Cardiac septum (tissue), 1 donor: ENCODE measurements at regions of chr1 and their contacts with region 1.

Region 1: DNA sequence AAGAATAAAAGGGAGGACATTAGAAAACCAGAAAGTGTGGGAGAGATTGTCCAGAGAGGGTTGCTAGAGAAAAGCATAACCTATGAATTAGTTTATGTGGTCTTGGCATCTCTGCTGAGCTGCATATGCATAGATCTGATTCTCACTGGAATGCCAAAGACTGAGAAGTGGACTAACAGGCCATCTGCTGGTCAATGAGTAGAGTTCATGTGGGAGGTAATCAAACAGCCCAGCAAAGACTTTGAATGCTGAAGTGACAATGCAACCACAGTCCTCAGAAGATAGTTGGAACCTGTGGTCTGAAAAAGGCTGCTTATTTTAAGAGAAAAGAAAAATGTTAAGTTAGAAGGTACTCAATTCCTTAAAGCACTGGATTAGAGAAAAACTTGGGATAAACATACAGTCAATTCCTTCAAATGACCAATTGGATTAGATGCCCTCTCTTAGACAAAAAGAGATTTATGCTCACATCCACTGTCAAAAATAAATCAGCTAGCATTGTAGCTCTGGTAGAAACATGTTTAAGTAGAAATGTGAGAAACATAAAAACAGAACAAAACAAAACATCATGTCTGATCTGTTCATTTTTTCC is 382.8 kb downstream of the AMY1C start:
- DNase-seq: no peak

Region 2: DNA sequence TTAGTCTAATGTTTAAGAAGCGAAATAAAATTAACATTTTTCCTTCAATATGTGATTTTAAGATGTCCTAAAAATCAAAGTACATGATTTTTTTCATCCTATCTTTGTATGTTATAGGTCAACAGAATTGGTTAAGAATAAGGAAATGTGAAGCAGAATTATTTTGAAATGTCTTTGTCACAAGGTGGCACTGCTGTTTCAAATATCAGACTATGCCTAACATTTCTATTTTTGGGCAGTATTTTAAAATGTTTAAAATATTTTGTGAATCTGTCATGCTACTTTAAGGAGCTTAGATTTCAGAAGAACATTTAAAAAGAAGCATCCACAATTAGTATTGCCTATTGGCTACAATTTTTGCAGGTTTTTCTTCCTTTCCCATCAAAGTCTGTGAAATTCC is 344.1 kb before region 1 on chr1:
- intact Hi-C with region 1: loop called (anchors 5 kb)
- DNase-seq: no peak

Region 3: GRCh38 chr1:104018922-104019674 is 113.4 kb before region 1 on chr1:
- intact Hi-C with region 1: no loop called
- DNase-seq: no peak

Region 4: DNA sequence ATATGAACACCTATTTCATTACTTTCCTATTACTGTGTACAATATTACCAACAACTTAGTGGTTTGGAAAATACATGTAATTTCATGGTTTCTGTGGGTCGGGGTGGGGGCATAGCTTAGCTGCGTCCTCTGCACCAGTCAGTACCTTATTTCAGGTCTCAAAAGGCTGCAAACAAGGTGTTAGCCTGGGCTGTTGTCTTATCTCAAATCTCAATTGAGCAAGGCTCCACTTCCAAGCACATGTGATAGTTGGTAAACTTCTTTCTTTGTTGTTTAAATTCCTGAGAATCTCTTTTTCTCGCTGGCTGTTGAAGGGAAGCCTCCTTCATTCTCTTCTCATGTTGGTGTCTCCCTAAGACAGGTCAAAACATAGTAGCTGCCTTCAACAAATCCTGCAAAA is 102.7 kb after region 1 on chr1:
- intact Hi-C with region 1: no loop called
- DNase-seq: no peak